Transverse colon (tissue), 4 donors: ENCODE measurements at regions of chr18 and their contacts with region 1.

Region 1: GRCh38 chr18:24600076-24600654 is 139.7 kb downstream of the HRH4 start:
- DNase-seq: no peak
- H3K4me3 ChIP-seq: no peak overlapping the region
- H3K27ac ChIP-seq: no peak overlapping the region
- H3K4me1 ChIP-seq: no peaks in the 10 kb centered on the region
- H3K27me3 ChIP-seq: no peaks in the 10 kb centered on the region
- CTCF ChIP-seq: peak; percentile 41 to 60 (median 55)
- EP300 ChIP-seq: no peak
- POLR2A ChIP-seq: no peak

Region 2: GRCh38 chr18:24631243-24632025 is 31.3 kb after region 1 on chr18:
- in situ Hi-C with region 1: no loop called
- intact Hi-C with region 1: no loop called
- DNase-seq: no peak
- H3K4me3 ChIP-seq: no peak overlapping the region
- H3K27ac ChIP-seq: no peak overlapping the region
- H3K4me1 ChIP-seq: no peaks in the 10 kb centered on the region
- H3K27me3 ChIP-seq: no peaks in the 10 kb centered on the region
- CTCF ChIP-seq: no peak
- EP300 ChIP-seq: no peak
- POLR2A ChIP-seq: no peak

Region 3: GRCh38 chr18:24659827-24660720 is 59.9 kb after region 1 on chr18:
- in situ Hi-C with region 1: loop called in 1 of 4 experiments (anchors 10 kb)
- intact Hi-C with region 1: no loop called
- DNase-seq: peak; percentile 24
- H3K4me3 ChIP-seq: peak overlapping the region in 3 of 4 donors; percentile 10 to 51 (median 22)
- H3K27ac ChIP-seq: peak overlapping the region; percentile 25 to 73 (median 50)
- H3K4me1 ChIP-seq: peaks cover 0 to 16% (median 4%) of the 10 kb centered on the region in 4 donors
- H3K27me3 ChIP-seq: peaks cover 6% of the 10 kb centered on the region
- CTCF ChIP-seq: no peak
- EP300 ChIP-seq: no peak
- POLR2A ChIP-seq: no peak

Region 4: GRCh38 chr18:24726727-24727492 is 126.7 kb after region 1 on chr18:
- in situ Hi-C with region 1: loop called (anchors 10 kb)
- intact Hi-C with region 1: loop called (anchors 5 kb)
- DNase-seq: peak; percentile 78
- H3K4me3 ChIP-seq: peak overlapping the region in 2 of 4 donors; percentile 25 to 27
- H3K27ac ChIP-seq: peak overlapping the region in 1 of 4 donors; percentile 43
- H3K4me1 ChIP-seq: peaks cover 0 to 17% (median 6%) of the 10 kb centered on the region in 4 donors
- H3K27me3 ChIP-seq: peaks cover 19% of the 10 kb centered on the region
- CTCF ChIP-seq: peak; percentile 71 to 82 (median 79)
- EP300 ChIP-seq: no peak
- POLR2A ChIP-seq: no peak

Region 5: DNA sequence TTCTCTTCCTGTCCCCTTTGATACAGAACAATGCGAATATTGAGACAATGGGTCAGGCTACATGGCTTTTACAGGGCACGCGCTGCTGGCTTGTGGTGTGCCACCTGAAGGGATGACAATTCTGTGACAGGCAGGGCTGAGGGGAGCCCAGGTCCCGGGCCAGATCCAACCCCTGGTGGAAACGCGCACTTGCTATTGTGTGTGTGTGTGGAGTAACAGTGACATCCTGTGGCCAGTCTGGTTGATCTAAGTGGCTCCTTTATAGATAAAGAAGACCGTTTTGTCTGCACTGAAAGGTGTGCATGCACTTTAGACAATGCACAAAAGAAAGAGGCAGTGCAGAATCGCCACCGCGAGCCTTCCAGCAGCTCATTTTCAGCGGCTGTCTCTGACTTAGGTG is 133.9 kb after region 1 on chr18:
- in situ Hi-C with region 1: loop called (anchors 10 kb)
- intact Hi-C with region 1: loop called (anchors 5 kb)
- DNase-seq: no peak
- H3K4me3 ChIP-seq: no peak overlapping the region
- H3K27ac ChIP-seq: no peak overlapping the region
- H3K4me1 ChIP-seq: peaks cover 0 to 11% (median 3%) of the 10 kb centered on the region in 4 donors
- H3K27me3 ChIP-seq: no peaks in the 10 kb centered on the region
- CTCF ChIP-seq: peak in 1 of 5 experiments; percentile 6
- EP300 ChIP-seq: no peak
- POLR2A ChIP-seq: no peak

Region 6: DNA sequence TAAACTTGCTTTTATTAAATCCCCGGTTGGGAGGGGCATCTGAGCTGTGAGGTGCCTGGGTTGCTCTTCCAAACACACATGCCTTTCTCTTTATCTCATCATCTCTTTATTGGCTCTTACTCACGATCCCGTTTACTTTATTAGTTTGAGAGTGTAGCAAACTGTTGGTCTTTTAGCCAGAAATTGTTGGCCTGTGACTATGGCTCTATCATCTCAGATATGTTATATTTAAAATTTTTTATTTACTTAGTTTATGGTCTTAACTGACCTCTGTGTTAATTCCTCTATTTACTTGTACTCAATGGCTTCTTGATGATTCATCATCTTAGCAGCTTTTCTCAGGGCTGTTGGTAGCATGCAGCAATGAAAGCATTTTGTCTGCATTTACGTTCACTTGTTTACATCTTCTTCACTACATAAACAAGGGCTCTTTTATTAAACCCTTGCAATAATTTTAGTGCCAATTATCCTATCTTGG is 268.6 kb after region 1 on chr18:
- in situ Hi-C with region 1: loop called in 1 of 4 experiments (anchors 25 kb)
- intact Hi-C with region 1: no loop called
- DNase-seq: no peak
- H3K4me3 ChIP-seq: no peak overlapping the region
- H3K27ac ChIP-seq: peak overlapping the region in 1 of 4 donors; percentile 28
- H3K4me1 ChIP-seq: peaks cover 0 to 15% (median 12%) of the 10 kb centered on the region in 4 donors
- H3K27me3 ChIP-seq: no peaks in the 10 kb centered on the region
- CTCF ChIP-seq: no peak
- EP300 ChIP-seq: no peak
- POLR2A ChIP-seq: no peak